ENCODE measurements at regions of chr2 and their contacts with region 1.

Region 1: GRCh38 chr2:191869178-191869577 is 22.3 kb upstream of the CAVIN2 start:
- DNase-seq: no peak
- ATAC-seq: no peak

Region 2: DNA sequence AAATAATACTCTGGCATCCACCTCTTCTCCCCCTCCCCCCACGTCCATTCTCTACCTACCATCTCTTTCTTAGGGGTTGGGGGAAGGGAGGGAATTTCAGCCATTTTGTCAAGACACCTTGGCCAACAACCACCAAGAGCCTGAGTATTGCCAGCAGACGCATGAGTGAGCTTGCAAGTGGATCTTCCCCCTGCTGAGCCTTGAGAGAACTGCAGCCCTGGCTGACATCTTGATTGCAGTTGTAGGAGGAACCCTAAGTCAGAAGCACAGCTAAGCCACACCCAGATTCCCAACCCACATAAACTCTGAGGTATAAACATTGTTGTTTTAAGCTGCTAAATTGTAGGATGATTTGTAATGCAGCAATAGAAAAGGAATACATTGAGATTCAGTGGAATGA is 159.9 kb after region 1 on chr2:
- intact Hi-C with region 1: loop called (anchors 5 kb)
- DNase-seq: no peak
- ATAC-seq: no peak

Measured in Right ventricle myocardium inferior (tissue), 1 donor.